Ascending aorta (tissue), 2 donors: ENCODE measurements at regions of chr9 and their contacts with region 1.

Region 1: DNA sequence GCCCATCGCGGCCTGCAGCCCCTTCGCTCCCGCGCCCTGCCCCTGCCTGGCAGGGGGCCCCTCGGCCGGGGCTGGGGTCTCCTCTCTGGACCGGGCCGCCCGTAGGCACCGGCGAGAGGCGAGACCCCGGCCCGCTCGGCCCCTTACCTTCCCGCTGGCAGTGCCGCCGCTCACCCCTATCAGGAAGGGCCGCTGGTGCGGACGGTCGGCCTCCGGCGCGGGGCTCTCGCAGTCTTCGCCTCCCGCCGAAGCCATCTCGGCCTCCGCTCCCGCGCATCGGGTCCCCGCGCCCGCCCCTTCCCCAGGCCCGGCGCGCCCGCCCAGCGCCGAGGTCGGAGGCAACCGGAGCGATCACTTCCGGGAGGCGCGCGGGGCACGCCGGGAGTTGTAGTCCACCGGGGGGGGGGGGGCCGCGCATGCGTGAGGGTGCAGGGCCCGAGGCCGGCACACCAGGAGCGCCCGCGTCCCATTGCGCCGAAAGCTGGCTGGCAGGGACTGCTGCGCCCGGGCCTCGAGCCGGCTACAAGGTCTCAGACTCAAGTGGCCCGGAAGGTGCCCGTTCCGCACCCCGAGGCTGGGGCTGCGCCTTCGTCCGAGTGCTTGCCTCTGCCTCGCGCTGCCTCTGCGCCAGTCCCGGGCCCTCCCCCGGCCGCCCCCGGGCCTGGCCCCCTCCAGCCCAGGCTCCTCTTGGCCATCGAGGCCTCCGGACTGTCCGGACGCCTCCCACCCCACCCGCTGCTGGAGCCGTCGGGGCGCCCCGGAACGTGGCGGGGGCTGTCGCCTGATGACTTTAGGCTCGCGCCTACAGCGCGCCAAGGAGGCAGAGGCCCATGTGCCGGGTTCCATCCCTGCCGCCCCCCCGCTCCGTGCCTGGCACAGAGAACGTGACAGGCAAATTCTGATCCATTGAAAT is at the start of gene UCK1:
- DNase-seq: peak in 1 of 2 donors; percentile 80
- H3K4me3 ChIP-seq: peak within 1 kb of the TSS; percentile 93 to 99
- H3K27ac ChIP-seq: peak within 1 kb of the TSS; percentile 79 to 81
- H3K4me1 ChIP-seq: peaks cover 11 to 14% of the 10 kb centered on the region in 2 donors
- H3K27me3 ChIP-seq: no peaks in the 10 kb centered on the region
- CTCF ChIP-seq: no peak
- total RNA-seq, gene UCK1: 39.8 TPM

Region 2: DNA sequence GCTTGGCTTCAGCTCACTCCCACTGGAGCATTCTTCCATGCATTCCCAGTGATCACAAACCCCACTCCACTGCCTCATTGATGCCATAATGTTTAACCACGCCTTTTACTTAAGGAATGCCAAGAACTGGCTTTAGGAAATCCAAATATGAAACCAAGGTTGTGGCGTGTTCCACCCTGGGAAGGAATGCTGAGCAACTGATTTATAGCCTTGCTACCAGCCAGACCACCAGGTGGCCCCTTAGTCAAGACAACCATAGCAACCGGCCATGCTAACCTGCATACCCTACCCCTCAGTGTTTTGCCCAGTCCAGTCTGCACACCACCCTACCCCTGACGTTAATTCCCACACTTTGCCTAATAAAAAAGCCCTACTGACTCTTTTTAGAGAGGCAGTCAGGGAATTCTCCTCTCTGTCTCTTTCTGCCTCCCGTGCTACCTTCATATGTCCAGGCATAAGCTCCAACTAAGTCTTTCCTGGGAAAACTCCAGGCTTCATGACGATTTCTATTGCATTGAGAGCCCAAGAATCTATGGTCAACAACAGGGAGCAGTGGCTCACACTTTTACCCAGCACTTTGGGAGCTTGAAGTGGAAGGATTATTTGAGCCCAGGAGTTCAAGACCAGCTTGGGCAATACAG is 164.3 kb before region 1 on chr9:
- intact Hi-C with region 1: loop called (anchors 2 kb)
- DNase-seq: no peak
- H3K4me3 ChIP-seq: no peak overlapping the region
- H3K27ac ChIP-seq: no peak overlapping the region
- H3K4me1 ChIP-seq: no peaks in the 10 kb centered on the region
- H3K27me3 ChIP-seq: no peaks in the 10 kb centered on the region
- CTCF ChIP-seq: peak; percentile 13 to 49 (median 19)